MCF 10A (cell line): ENCODE measurements at regions of chr20 and their contacts with region 1.

Region 1: GRCh38 chr20:16761305-16761829 is 13.2 kb downstream of the OTOR start:
- DNase-seq: peak; percentile 72
- H3K4me3 Mint-ChIP-seq: no peak overlapping the region
- H3K27ac Mint-ChIP-seq: no peak overlapping the region
- H3K4me1 Mint-ChIP-seq: no peaks in the 10 kb centered on the region
- H3K27me3 Mint-ChIP-seq: peaks cover 29% of the 10 kb centered on the region
- CTCF ChIP-seq: peak; percentile 78

Region 2: DNA sequence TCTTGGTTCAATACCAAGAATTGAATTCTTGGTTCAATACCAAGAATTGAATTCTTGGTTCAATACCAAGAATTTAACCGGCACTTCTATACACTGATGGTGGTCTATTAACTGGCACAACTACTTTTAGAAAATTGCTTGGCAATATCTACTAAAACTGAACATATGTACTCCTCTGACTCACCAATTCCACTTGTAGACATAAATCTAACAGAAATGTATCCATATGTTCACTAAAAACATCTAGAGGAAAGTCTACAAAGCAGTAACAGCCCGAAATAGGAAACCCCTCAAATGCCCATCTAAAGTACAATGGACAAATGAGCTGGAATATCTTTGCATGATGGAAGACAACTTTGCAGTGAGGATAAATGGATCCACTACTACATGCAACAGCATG is 260.1 kb before region 1 on chr20:
- CTCF ChIA-PET with region 1: interaction called, 11 read pairs
- POLR2A ChIA-PET with region 1: no interaction called
- intact Hi-C with region 1: no loop called
- DNase-seq: no peak
- H3K4me3 Mint-ChIP-seq: no peak overlapping the region
- H3K27ac Mint-ChIP-seq: no peak overlapping the region
- H3K4me1 Mint-ChIP-seq: peaks cover 11% of the 10 kb centered on the region
- H3K27me3 Mint-ChIP-seq: no peaks in the 10 kb centered on the region
- CTCF ChIP-seq: no peak

Region 3: GRCh38 chr20:16684416-16684815 is 77.0 kb before region 1 on chr20:
- CTCF ChIA-PET with region 1: no interaction called
- POLR2A ChIA-PET with region 1: no interaction called
- intact Hi-C with region 1: no loop called
- DNase-seq: no peak
- H3K4me3 Mint-ChIP-seq: no peak overlapping the region
- H3K27ac Mint-ChIP-seq: no peak overlapping the region
- H3K4me1 Mint-ChIP-seq: no peaks in the 10 kb centered on the region
- H3K27me3 Mint-ChIP-seq: no peaks in the 10 kb centered on the region
- CTCF ChIP-seq: no peak

Region 4: GRCh38 chr20:16701296-16701695 is 60.1 kb before region 1 on chr20:
- CTCF ChIA-PET with region 1: interaction called, 7 read pairs
- POLR2A ChIA-PET with region 1: no interaction called
- intact Hi-C with region 1: loop called (anchors 1 kb)
- DNase-seq: peak; percentile 40
- H3K4me3 Mint-ChIP-seq: no peak overlapping the region
- H3K27ac Mint-ChIP-seq: no peak overlapping the region
- H3K4me1 Mint-ChIP-seq: no peaks in the 10 kb centered on the region
- H3K27me3 Mint-ChIP-seq: no peaks in the 10 kb centered on the region
- CTCF ChIP-seq: no peak

Region 5: DNA sequence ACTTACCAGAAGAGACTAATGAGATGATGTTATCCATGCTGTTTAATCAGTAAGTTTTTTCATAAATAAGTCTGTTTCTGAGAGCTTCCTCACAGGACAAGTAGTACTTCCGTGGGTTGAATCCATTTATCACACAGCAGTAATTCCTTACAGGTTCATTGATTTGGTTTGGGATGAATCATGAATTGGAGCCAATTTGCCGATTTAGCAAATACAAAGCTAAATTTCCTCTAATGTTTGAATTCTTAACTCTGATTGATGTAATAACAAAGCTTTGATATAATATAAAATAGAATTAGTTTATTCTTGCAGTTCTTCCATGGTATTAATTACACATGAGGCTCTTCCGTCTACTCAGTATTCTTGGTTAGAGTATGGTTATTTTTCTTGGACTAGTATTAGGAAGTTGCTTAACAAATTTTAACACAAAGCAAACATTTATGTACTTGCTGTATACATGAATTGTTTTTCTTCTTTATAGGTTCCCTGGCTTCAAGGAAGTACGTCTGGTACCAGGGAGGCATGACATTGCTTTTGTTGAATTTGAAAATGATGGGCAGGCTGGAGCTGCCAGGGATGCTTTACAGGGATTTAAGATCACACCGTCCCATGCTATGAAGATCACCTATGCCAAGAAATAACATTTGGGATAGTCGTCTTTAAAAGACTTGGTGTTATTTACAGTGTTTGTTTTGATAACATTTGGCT is 20.8 kb before region 1 on chr20:
- CTCF ChIA-PET with region 1: interaction called, 22 read pairs
- POLR2A ChIA-PET with region 1: no interaction called
- intact Hi-C with region 1: no loop called
- DNase-seq: no peak
- H3K4me3 Mint-ChIP-seq: no peak overlapping the region
- H3K27ac Mint-ChIP-seq: no peak overlapping the region
- H3K4me1 Mint-ChIP-seq: peaks cover 5% of the 10 kb centered on the region
- H3K27me3 Mint-ChIP-seq: no peaks in the 10 kb centered on the region
- CTCF ChIP-seq: no peak

Region 6: DNA sequence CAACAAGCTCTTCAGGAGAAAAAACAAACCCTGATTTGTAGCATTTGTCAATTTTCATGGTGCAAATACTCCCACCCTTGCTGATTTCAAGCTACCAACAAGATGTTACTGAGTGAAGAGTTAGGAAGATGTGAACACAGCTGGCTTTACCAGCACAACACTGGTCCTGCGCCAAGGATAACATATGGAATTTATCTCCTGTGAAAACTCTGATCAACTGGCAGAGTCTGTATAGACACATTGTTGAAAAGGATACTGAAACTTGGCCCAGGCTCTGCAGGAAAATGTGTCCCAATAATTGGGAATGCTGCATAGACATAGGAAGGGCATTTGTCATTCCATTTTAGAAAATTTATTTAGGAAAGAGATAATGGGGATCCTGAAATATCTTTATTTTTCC is 15.8 kb after region 1 on chr20:
- CTCF ChIA-PET with region 1: interaction called, 21 read pairs
- POLR2A ChIA-PET with region 1: no interaction called
- intact Hi-C with region 1: no loop called
- DNase-seq: no peak
- H3K4me3 Mint-ChIP-seq: no peak overlapping the region
- H3K27ac Mint-ChIP-seq: no peak overlapping the region
- H3K4me1 Mint-ChIP-seq: no peaks in the 10 kb centered on the region
- H3K27me3 Mint-ChIP-seq: peaks cover 71% of the 10 kb centered on the region
- CTCF ChIP-seq: no peak

Region 7: GRCh38 chr20:16917636-16918035 is 156.3 kb after region 1 on chr20:
- CTCF ChIA-PET with region 1: no interaction called
- POLR2A ChIA-PET with region 1: no interaction called
- intact Hi-C with region 1: no loop called
- DNase-seq: no peak
- H3K4me3 Mint-ChIP-seq: no peak overlapping the region
- H3K27ac Mint-ChIP-seq: no peak overlapping the region
- H3K4me1 Mint-ChIP-seq: peaks cover 4% of the 10 kb centered on the region
- H3K27me3 Mint-ChIP-seq: no peaks in the 10 kb centered on the region
- CTCF ChIP-seq: no peak